ENCODE measurements at regions of chr11 and their contacts with region 1.

Region 1: GRCh38 chr11:43738590-43739409 is 58.3 kb downstream of the HSD17B12 start:
- DNase-seq: peak; percentile 49
- H3K4me3 Mint-ChIP-seq: peak overlapping the region; percentile 49
- H3K27ac Mint-ChIP-seq: peak overlapping the region; percentile 73
- H3K4me1 Mint-ChIP-seq: peaks cover 51% of the 10 kb centered on the region
- H3K27me3 Mint-ChIP-seq: no peaks in the 10 kb centered on the region
- CTCF ChIP-seq: no peak

Region 2: GRCh38 chr11:43434893-43435292 is 303.9 kb before region 1 on chr11:
- CTCF ChIA-PET with region 1: no interaction called
- intact Hi-C with region 1: no loop called
- DNase-seq: no peak
- H3K4me3 Mint-ChIP-seq: no peak overlapping the region
- H3K27ac Mint-ChIP-seq: no peak overlapping the region
- H3K4me1 Mint-ChIP-seq: no peaks in the 10 kb centered on the region
- H3K27me3 Mint-ChIP-seq: no peaks in the 10 kb centered on the region
- CTCF ChIP-seq: no peak

Region 3: GRCh38 chr11:43632171-43632570 is 106.6 kb before region 1 on chr11:
- CTCF ChIA-PET with region 1: no interaction called
- intact Hi-C with region 1: no loop called
- DNase-seq: no peak
- H3K4me3 Mint-ChIP-seq: no peak overlapping the region
- H3K27ac Mint-ChIP-seq: no peak overlapping the region
- H3K4me1 Mint-ChIP-seq: no peaks in the 10 kb centered on the region
- H3K27me3 Mint-ChIP-seq: peaks cover 50% of the 10 kb centered on the region
- CTCF ChIP-seq: no peak

Region 4: DNA sequence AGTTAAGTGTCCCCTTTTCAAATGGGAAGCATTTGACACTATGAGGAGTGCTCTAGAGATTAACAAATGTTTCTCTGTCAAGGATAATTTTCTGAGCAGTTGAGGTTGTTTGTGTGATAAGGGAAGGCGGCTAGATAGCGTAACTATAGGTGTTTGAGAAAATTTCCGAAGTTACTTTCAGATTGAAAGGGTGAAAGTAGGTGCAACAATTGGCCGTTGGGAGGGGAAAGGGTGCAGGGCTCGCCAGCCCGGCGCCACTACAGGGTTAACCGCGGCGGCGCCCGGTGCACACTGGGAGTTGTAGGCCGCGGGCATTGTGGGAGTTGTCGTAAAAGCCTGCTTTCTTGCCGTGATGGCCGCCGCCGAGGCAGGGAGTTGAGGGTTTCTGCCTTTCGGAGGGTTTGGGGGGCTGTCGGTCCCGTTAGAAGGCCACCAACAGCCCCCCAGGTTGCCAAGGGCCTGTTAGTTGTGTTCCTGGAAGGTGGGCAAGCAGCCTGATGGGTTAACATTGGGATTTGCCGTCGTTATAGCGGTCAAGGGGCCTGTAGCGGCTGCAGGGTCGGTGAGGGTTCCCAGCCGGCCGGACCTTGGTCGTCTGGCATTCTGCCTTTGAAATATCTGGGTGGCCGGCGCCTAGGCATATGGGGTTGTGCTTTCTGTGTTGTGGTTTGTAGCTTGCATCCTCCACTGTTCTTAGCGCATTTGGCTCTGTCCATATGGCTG is 94.7 kb before region 1 on chr11:
- CTCF ChIA-PET with region 1: no interaction called
- intact Hi-C with region 1: loop called (anchors 5 kb)
- DNase-seq: peak; percentile 87
- H3K4me3 Mint-ChIP-seq: peak overlapping the region; percentile 75
- H3K27ac Mint-ChIP-seq: peak overlapping the region; percentile 69
- H3K4me1 Mint-ChIP-seq: no peaks in the 10 kb centered on the region
- H3K27me3 Mint-ChIP-seq: peaks cover 17% of the 10 kb centered on the region
- CTCF ChIP-seq: no peak

Region 5: GRCh38 chr11:43680521-43681400 is 58.0 kb before region 1 on chr11 and contains the start of gene HSD17B12:
- CTCF ChIA-PET with region 1: no interaction called
- intact Hi-C with region 1: loop called (anchors 2 kb)
- DNase-seq: peak; percentile 99
- H3K4me3 Mint-ChIP-seq: peak within 1 kb of the TSS; percentile 81
- H3K27ac Mint-ChIP-seq: peak within 1 kb of the TSS; percentile 79
- H3K4me1 Mint-ChIP-seq: no peaks in the 10 kb centered on the region
- H3K27me3 Mint-ChIP-seq: peaks cover under 1% of the 10 kb centered on the region
- CTCF ChIP-seq: no peak
- total RNA-seq, gene HSD17B12: 114 TPM in 2 replicates